Activated CD4-positive, alpha-beta T cell treated with anti-CD3 and anti-CD28 coated beads, Interleukin-2, amount 10 ng/mL, durations not matched to agents 24 days and 14 days (primary cell): ENCODE measurements at regions of chr1 and their contacts with region 1.

Region 1: GRCh38 chr1:25099343-25099951 is 132.9 kb downstream of the SYF2 start:
- DNase-seq: peak; percentile 81
- H3K4me3 Mint-ChIP-seq: peak overlapping the region; percentile 72
- H3K27ac Mint-ChIP-seq: peak overlapping the region; percentile 83
- H3K4me1 Mint-ChIP-seq: peaks cover 71% of the 10 kb centered on the region
- H3K27me3 Mint-ChIP-seq: peaks cover 3% of the 10 kb centered on the region

Region 2: GRCh38 chr1:24847995-24848881 is 251.2 kb before region 1 on chr1:
- intact Hi-C with region 1: loop called (anchors 1 kb)
- DNase-seq: peak; percentile 97
- H3K4me3 Mint-ChIP-seq: peak overlapping the region; percentile 82
- H3K27ac Mint-ChIP-seq: no peak overlapping the region
- H3K4me1 Mint-ChIP-seq: peaks cover 15% of the 10 kb centered on the region
- H3K27me3 Mint-ChIP-seq: peaks cover 33% of the 10 kb centered on the region

Region 3: GRCh38 chr1:24923485-24924113 is 175.8 kb before region 1 on chr1:
- intact Hi-C with region 1: loop called (anchors 2 kb)
- DNase-seq: no peak
- H3K4me3 Mint-ChIP-seq: peak overlapping the region; percentile 23
- H3K27ac Mint-ChIP-seq: peak overlapping the region; percentile 78
- H3K4me1 Mint-ChIP-seq: peaks cover 67% of the 10 kb centered on the region
- H3K27me3 Mint-ChIP-seq: peaks cover 2% of the 10 kb centered on the region

Region 4: GRCh38 chr1:24930204-24931145 is 169.0 kb before region 1 on chr1 and contains the start of gene RUNX3:
- intact Hi-C with region 1: loop called (anchors 2 kb)
- DNase-seq: peak; percentile 97
- H3K4me3 Mint-ChIP-seq: peak within 1 kb of the TSS; percentile 96
- H3K27ac Mint-ChIP-seq: peak within 1 kb of the TSS; percentile 92
- H3K4me1 Mint-ChIP-seq: peaks cover 69% of the 10 kb centered on the region
- H3K27me3 Mint-ChIP-seq: no peaks in the 10 kb centered on the region
- total RNA-seq, gene RUNX3: 110 and 112 TPM in 2 replicates

Region 5: GRCh38 chr1:24964811-24965570 is 134.5 kb before region 1 on chr1:
- intact Hi-C with region 1: loop called (anchors 1 kb)
- DNase-seq: peak; percentile 98
- H3K4me3 Mint-ChIP-seq: peak overlapping the region; percentile 96
- H3K27ac Mint-ChIP-seq: peak overlapping the region; percentile 97
- H3K4me1 Mint-ChIP-seq: peaks cover 71% of the 10 kb centered on the region
- H3K27me3 Mint-ChIP-seq: no peaks in the 10 kb centered on the region

Region 6: DNA sequence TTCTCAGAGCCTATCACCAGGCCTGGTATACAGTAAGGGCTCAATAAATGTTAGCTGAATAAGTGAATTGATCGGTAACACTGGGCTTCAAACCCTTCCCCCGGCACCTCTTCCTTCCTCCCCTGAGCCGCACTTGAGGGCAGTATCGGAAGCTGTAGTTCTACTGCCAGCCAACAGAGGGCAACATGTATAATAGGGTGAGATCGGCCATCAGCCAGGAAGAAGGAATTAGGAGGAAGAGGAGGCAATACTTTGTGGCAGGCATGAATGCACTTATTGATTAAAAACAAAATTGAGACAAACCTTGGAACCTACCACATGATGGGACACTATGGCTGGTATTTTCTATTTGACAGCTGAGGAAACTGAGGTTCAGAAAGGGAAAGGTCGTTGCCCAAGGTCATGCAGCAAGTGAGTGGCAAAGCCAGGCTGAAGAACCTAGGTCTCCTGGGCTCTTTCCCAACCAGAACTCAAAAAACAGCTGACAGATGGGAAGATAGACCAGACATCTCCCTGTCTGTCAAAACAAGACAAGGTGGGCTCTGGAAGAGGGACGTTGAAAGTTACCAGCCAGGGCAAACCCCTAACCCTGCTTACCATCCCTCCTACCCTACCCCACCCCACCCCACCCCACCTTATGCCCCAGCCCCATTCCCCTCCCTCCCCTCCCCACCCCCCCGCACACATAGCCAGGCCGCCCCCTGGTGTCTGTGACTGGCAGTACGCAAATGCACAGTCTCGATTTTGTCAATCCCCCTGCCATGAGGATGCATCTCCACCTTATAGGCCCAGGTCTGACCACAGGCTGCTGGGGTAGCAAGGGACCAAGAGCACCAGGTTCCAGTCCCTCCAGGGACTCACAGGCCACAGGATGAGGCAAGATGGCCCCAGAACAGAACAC is 62.0 kb before region 1 on chr1:
- intact Hi-C with region 1: loop called (anchors 1 kb)
- DNase-seq: peak; percentile 90
- H3K4me3 Mint-ChIP-seq: peak overlapping the region; percentile 47
- H3K27ac Mint-ChIP-seq: peak overlapping the region; percentile 64
- H3K4me1 Mint-ChIP-seq: peaks cover 42% of the 10 kb centered on the region
- H3K27me3 Mint-ChIP-seq: peaks cover 9% of the 10 kb centered on the region

Region 7: GRCh38 chr1:25063591-25064416 is 35.6 kb before region 1 on chr1:
- intact Hi-C with region 1: loop called (anchors 5 kb)
- DNase-seq: no peak
- H3K4me3 Mint-ChIP-seq: no peak overlapping the region
- H3K27ac Mint-ChIP-seq: peak overlapping the region; percentile 45
- H3K4me1 Mint-ChIP-seq: peaks cover 17% of the 10 kb centered on the region
- H3K27me3 Mint-ChIP-seq: peaks cover 12% of the 10 kb centered on the region